Heart left ventricle (tissue), 16 donors: ENCODE measurements at regions of chr6 and their contacts with region 1.

Region 1: DNA sequence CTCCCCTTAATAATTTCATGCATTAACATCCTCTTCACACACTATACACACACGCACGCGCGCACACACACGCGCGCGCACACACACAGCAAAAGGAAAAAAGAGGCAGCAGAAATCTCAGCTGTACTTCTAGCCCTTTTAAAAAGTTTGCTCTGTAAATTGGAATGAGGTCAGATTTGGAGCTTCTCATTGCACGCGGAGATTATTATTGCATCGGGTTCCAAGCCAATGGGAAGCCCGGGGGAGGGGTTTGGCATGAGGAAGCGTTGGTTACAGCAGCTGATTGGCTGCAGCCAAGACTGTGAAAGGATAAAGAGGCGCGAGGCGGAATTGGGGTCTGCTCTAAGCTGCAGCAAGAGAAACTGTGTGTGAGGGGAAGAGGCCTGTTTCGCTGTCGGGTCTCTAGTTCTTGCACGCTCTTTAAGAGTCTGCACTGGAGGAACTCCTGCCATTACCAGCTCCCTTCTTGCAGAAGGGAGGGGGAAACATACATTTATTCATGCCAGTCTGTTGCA is at the start of gene SOX4:
- DNase-seq: peak; percentile 93 to 97 (median 95)
- ATAC-seq: peak; percentile 77 to 90 (median 85)
- H3K4me3 ChIP-seq: peak within 1 kb of the TSS; percentile 49 to 93 (median 79)
- H3K27ac ChIP-seq: peak within 1 kb of the TSS; percentile 74 to 92 (median 90)
- H3K4me1 ChIP-seq: peaks cover 0 to 26% (median 14%) of the 10 kb centered on the region in 12 donors
- H3K27me3 ChIP-seq: no peaks in the 10 kb centered on the region
- CTCF ChIP-seq: no peak
- POLR2A ChIP-seq: peak in 1 of 2 donors; percentile 93
- total RNA-seq, gene SOX4: 1.9 to 20.3 (median 8.0) TPM

Region 2: DNA sequence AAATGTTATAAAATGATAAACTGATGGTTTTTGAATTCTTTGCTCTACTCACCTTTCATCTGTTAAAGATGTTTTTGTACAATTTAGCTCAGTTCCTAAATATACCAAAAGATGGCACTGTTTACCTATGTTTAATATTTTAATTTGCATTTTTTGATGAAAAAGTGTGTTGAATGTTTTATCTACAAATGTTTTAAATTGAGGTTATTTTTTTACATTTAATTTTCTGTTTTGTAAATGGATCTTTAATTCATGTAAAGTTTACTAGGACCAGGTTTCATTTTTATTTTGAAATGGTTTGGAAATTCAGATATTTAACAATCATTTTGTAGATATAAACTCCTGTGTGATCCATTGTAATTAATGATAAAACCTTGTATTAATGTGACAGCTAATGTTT is 1029.2 kb before region 1 on chr6:
- intact Hi-C with region 1: loop called (anchors 2 to 5 kb)
- DNase-seq: no peak
- ATAC-seq: no peak
- H3K4me3 ChIP-seq: no peak overlapping the region
- H3K27ac ChIP-seq: no peak overlapping the region
- H3K4me1 ChIP-seq: peaks cover 0 to 8% (median 0%) of the 10 kb centered on the region in 12 donors
- H3K27me3 ChIP-seq: no peaks in the 10 kb centered on the region
- CTCF ChIP-seq: peak; percentile 59 to 78 (median 67)
- POLR2A ChIP-seq: no peak

Region 3: DNA sequence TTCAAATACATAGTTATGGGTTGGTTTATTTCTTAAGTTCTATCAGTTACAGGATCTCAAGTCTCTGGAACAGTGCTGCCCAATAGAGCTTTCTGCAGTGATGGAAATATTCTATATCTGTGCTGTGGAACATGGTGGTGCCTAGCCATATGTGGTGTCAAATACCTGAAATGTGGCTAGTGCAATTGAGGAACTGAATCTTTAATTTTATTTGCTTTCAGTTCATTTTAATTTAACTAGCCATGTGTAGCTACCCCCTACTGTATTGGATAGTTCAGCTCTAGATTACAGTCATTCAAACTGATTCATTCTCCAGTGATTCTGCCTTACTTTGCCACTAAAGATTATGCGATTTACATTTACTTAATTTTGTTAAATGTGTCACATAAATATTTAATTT is 556.0 kb before region 1 on chr6:
- intact Hi-C with region 1: no loop called
- DNase-seq: no peak
- ATAC-seq: no peak
- H3K4me3 ChIP-seq: no peak overlapping the region
- H3K27ac ChIP-seq: no peak overlapping the region
- H3K4me1 ChIP-seq: peaks cover 0 to 5% (median 0%) of the 10 kb centered on the region in 12 donors
- H3K27me3 ChIP-seq: no peaks in the 10 kb centered on the region
- CTCF ChIP-seq: no peak
- POLR2A ChIP-seq: no peak

Region 4: GRCh38 chr6:21331235-21331634 is 262.2 kb before region 1 on chr6:
- intact Hi-C with region 1: loop called in 2 of 10 experiments (anchors 10 kb)
- DNase-seq: peak in 4 of 5 donors; percentile 41 to 81 (median 50)
- ATAC-seq: peak; percentile 61 to 97 (median 86)
- H3K4me3 ChIP-seq: no peak overlapping the region
- H3K27ac ChIP-seq: no peak overlapping the region
- H3K4me1 ChIP-seq: peaks cover 0 to 10% (median 0%) of the 10 kb centered on the region in 12 donors
- H3K27me3 ChIP-seq: no peaks in the 10 kb centered on the region
- CTCF ChIP-seq: no peak
- POLR2A ChIP-seq: no peak

Region 5: DNA sequence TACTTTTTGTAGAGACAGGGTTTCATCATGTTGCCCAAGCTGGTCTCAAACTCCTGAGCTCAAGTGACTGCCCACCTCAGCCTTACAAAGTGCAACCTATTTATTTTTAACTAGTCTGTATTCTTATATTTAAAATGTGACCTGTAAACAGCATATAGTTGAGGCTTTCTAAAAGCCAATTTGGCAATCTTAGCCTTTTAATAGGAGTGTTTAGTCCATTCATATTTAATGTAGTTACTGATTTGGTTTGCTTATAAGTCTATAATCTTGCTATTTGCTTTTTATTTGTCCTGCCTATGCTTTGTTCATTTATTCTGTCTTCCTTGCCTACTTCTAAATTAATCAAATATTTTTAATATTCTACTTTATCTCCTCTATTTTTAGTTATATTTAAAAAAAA is 14.9 kb before region 1 on chr6:
- intact Hi-C with region 1: no loop called
- DNase-seq: no peak
- ATAC-seq: no peak
- H3K4me3 ChIP-seq: no peak overlapping the region
- H3K27ac ChIP-seq: no peak overlapping the region
- H3K4me1 ChIP-seq: no peaks in the 10 kb centered on the region
- H3K27me3 ChIP-seq: no peaks in the 10 kb centered on the region
- CTCF ChIP-seq: no peak
- POLR2A ChIP-seq: no peak

Region 6: DNA sequence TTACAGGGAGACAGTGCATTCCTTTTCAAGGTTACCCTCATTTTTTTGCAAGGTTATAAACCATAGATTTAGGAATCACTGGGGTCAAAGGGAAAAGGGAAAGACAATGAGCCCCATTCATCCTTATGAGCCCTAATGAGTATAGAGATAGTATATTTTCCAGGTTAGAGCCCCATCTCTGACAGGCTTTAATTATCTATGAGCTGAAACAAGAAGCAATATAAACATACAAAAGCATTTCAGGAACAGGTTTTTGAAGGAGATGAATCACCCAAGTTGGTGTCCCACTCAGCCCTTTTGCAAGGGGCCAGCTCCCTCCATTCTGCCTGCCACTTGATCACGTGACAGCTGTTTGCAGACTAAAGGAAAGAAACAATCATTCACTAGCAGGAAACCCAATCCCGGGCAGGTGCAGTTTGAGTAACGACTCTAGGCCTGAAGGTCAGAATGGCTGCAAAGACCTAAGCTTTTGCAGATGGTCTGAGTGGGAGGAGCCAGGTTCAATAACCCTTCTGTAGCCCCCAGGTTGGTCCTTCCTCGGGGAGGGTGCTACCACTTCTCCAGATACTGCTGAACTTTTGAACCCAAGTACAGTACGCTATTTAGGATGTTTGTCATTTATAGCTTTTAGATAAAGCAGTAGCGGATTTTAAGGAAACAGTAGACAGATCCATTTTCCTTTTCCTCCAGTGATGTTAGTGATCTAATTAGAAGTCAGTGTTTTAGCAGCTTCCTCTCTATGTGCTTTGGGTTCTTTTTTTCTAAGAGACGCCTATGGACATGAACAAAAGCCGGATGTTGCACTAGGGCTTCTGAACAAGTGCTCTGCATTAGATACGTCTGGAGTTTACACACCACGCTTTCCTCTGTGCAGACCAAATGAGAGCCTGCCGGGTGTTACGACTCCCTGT is 253.3 kb after region 1 on chr6:
- intact Hi-C with region 1: loop called in 3 of 10 experiments (anchors 5 to 10 kb)
- DNase-seq: peak in 2 of 5 donors; percentile 27 to 35
- ATAC-seq: peak in 3 of 4 donors; percentile 51 to 85 (median 66)
- H3K4me3 ChIP-seq: no peak overlapping the region
- H3K27ac ChIP-seq: peak overlapping the region in 9 of 12 donors; percentile 4 to 44 (median 24)
- H3K4me1 ChIP-seq: peaks cover 6 to 54% (median 45%) of the 10 kb centered on the region in 12 donors
- H3K27me3 ChIP-seq: no peaks in the 10 kb centered on the region
- CTCF ChIP-seq: no peak
- POLR2A ChIP-seq: no peak

Region 7: DNA sequence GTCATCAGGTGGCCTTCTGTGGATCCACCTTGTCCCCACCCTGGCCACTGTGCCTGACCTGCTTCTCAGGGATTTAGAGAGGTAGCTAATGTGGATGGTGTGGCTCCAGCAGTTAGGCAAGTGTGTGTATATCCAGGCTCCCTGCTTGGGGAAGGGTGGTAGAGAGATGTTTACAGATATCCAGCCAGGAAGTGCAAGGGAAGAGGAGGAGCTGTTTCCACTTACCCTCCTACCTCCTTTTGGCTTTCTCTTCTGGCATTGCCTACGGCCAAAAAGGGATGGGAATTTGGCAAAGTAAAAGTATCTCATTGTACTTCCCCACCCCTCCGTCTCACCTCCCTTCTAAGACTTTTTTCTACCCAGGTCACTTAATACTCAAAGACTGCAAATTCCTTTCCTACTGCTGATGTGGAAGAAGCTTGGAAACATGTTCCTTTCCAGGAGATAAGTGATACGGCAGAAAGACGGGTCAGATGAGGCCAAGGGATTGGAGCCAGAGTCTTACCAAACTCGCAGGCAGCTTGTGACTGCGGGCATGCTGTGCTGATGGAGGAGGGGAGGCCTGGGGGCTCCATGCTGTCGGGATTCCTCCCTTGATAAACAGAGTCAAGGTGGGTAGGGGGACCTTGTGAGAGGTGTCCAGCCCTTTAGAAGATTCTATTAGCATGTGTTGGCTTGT is 450.0 kb after region 1 on chr6:
- intact Hi-C with region 1: loop called in 1 of 10 experiments (anchors 10 kb)
- DNase-seq: peak in 4 of 5 donors; percentile 33 to 43 (median 36)
- ATAC-seq: peak; percentile 77 to 92 (median 88)
- H3K4me3 ChIP-seq: peak overlapping the region in 7 of 12 donors; percentile 14 to 42 (median 35)
- H3K27ac ChIP-seq: peak overlapping the region; percentile 29 to 80 (median 62)
- H3K4me1 ChIP-seq: peaks cover 0 to 30% (median 18%) of the 10 kb centered on the region in 12 donors
- H3K27me3 ChIP-seq: no peaks in the 10 kb centered on the region
- CTCF ChIP-seq: no peak
- POLR2A ChIP-seq: no peak

Region 8: DNA sequence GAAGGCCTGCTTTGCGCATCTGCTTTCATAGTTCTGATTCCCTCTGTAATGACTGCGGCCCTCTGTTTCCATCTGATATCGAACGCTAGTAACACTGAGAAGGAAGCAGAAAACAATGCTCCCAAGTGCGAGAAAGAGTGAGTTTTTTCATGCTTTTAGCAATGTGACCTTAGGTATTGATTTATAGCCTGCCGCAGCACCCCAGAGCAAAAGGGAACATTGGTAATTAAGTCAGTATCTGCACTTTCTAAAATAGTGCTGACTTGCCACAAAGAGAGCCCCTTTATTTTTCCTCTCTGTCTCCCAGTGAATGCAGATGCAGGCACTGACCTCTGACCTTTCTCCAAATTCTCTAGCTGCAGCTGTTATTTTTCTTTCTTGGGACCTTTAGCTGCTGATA is 1105.7 kb after region 1 on chr6:
- intact Hi-C with region 1: loop called in 1 of 10 experiments (anchors 10 kb)
- DNase-seq: no peak
- ATAC-seq: no peak
- H3K4me3 ChIP-seq: no peak overlapping the region
- H3K27ac ChIP-seq: peak overlapping the region in 2 of 12 donors; percentile 2 to 17
- H3K4me1 ChIP-seq: peaks cover 0 to 14% (median 0%) of the 10 kb centered on the region in 12 donors
- H3K27me3 ChIP-seq: no peaks in the 10 kb centered on the region
- CTCF ChIP-seq: no peak
- POLR2A ChIP-seq: no peak

Region 9: GRCh38 chr6:22906091-22906555 is 1312.7 kb after region 1 on chr6:
- intact Hi-C with region 1: loop called in 1 of 10 experiments (anchors 10 kb)
- DNase-seq: no peak
- ATAC-seq: peak in 3 of 4 donors; percentile 28 to 56 (median 51)
- H3K4me3 ChIP-seq: no peak overlapping the region
- H3K27ac ChIP-seq: no peak overlapping the region
- H3K4me1 ChIP-seq: peaks cover 0 to 8% (median 0%) of the 10 kb centered on the region in 12 donors
- H3K27me3 ChIP-seq: no peaks in the 10 kb centered on the region
- CTCF ChIP-seq: peak in 11 of 12 donors; percentile 6 to 49 (median 36)
- POLR2A ChIP-seq: no peak